Gastrocnemius medialis (tissue), 4 donors: ENCODE measurements at regions of chr17 and their contacts with region 1.

Region 1: GRCh38 chr17:74379495-74380085 is 12.3 kb downstream of the GPR142 start:
- DNase-seq: peak; percentile 84 to 92
- ATAC-seq: peak; percentile 81 to 84
- H3K4me3 ChIP-seq: peak overlapping the region; percentile 34 to 48 (median 44)
- H3K27ac ChIP-seq: peak overlapping the region; percentile 94 to 97 (median 96)
- H3K4me1 ChIP-seq: peaks cover 17 to 21% of the 10 kb centered on the region in 2 donors
- H3K27me3 ChIP-seq: no peaks in the 10 kb centered on the region
- CTCF ChIP-seq: peak; percentile 97 to 99 (median 99)
- POLR2A ChIP-seq: no peak

Region 2: DNA sequence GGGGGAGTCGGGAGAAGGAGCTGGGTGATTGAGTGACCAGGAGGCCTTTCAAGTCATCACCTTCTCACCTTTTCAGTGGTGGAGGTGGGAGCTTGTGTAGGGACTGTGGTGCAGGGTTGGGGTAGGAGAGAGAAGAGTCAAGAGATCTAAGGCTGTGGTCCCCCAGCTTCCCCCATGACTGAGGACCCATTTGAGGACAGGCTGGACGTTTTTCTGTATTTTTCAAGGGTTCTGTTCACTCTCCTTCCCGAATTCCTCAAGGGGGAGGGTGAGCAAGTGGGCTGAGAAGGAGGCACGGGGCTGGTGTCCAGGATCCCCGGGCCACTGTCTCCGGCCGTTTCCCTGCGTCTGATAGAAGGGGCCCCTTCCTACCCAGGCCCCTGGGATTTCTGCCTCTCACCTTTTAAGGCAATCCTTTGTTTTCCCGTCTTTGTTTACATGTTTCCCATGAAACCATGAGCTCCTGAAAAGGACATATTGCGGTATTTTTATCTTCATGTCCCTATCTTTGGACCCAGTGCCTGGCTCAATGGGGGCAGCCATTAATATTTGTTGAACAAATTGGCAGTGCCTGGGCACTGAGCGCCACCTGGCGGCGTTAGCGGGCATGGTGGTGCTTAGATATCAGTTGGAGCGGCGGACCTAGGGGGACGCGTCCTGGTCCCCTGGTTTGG is 77.7 kb after region 1 on chr17:
- in situ Hi-C with region 1: loop called in 1 of 4 experiments (anchors 5 kb)
- intact Hi-C with region 1: loop called (anchors 1 kb)
- DNase-seq: peak in 1 of 2 donors; percentile 78
- ATAC-seq: peak; percentile 24 to 28
- H3K4me3 ChIP-seq: peak overlapping the region in 2 of 4 donors; percentile 25 to 39
- H3K27ac ChIP-seq: peak overlapping the region; percentile 58 to 97 (median 69)
- H3K4me1 ChIP-seq: peaks cover 29 to 36% of the 10 kb centered on the region in 2 donors
- H3K27me3 ChIP-seq: no peaks in the 10 kb centered on the region
- CTCF ChIP-seq: peak; percentile 98 to 99 (median 98)
- POLR2A ChIP-seq: no peak

Region 3: GRCh38 chr17:74493381-74493833 is 113.8 kb after region 1 on chr17:
- in situ Hi-C with region 1: loop called in 2 of 4 experiments (anchors 10 kb)
- intact Hi-C with region 1: loop called (anchors 1 kb)
- DNase-seq: peak; percentile 34 to 62
- ATAC-seq: peak; percentile 95 to 97
- H3K4me3 ChIP-seq: no peak overlapping the region
- H3K27ac ChIP-seq: no peak overlapping the region
- H3K4me1 ChIP-seq: peaks cover 4 to 12% of the 10 kb centered on the region in 2 donors
- H3K27me3 ChIP-seq: no peaks in the 10 kb centered on the region
- CTCF ChIP-seq: peak; percentile 84 to 92 (median 89)
- POLR2A ChIP-seq: no peak

Region 4: GRCh38 chr17:74776044-74776977 is 396.7 kb after region 1 on chr17 and contains the start of gene NAT9:
- in situ Hi-C with region 1: no loop called
- intact Hi-C with region 1: loop called (anchors 10 kb)
- DNase-seq: peak; percentile 93 to 96
- ATAC-seq: peak; percentile 95 to 96
- H3K4me3 ChIP-seq: peak within 1 kb of the TSS; percentile 75 to 99 (median 93)
- H3K27ac ChIP-seq: peak within 1 kb of the TSS; percentile 84 to 91 (median 87)
- H3K4me1 ChIP-seq: peaks cover 17 to 23% of the 10 kb centered on the region in 2 donors
- H3K27me3 ChIP-seq: no peaks in the 10 kb centered on the region
- CTCF ChIP-seq: no peak
- POLR2A ChIP-seq: peak; percentile 65 to 77
- total RNA-seq, gene NAT9: 7.7 to 27.4 (median 14.5) TPM

Region 5: GRCh38 chr17:74873038-74873873 is 493.7 kb after region 1 on chr17:
- in situ Hi-C with region 1: loop called in 1 of 4 experiments (anchors 25 kb)
- intact Hi-C with region 1: no loop called
- DNase-seq: peak; percentile 99 to 100
- ATAC-seq: peak; percentile 97 to 99
- H3K4me3 ChIP-seq: peak overlapping the region; percentile 71 to 83 (median 76)
- H3K27ac ChIP-seq: peak overlapping the region; percentile 86 to 95 (median 93)
- H3K4me1 ChIP-seq: peaks cover 14% of the 10 kb centered on the region in 2 donors
- H3K27me3 ChIP-seq: no peaks in the 10 kb centered on the region
- CTCF ChIP-seq: peak in 1 of 5 experiments; percentile 31
- POLR2A ChIP-seq: peak; percentile 77 to 97